ENCODE measurements at regions of chr6 and their contacts with region 1.

Region 1: DNA sequence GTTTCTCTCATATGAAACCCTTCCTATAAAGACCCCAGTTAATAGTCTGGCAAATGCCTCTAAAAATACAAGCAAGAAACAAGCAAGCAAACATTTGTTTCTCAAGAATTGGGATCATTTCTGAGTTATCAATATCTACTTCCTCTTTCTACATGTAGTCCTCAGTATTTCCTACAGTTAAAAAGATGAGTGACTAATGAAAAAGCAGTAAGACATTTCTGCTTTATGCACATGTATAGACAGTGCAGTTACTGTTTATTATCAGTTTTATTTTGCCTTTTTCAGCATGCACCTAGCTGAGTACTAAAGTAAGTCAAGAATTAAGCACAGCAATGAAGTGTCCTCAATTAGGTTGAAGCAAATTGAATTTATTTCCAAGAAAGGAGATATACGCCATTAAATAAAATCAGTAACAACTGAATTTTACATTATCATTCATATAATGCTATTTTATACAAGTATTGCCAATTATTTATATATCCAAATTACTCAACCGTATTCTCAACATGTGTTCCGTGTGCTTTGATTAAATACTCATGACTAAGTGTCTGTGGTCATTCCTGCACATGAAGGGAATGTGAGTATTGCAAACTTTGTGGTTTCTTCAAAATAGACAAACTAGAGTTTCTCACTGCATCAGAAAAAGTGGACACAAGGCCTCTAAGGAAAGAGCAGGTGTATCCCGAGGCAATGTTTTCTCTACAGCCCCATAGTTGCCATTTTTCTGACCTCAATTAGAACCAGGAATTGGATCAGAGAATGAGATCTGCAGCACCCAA is 159.3 kb upstream of the MARCKS start:
- H3K4me3 Mint-ChIP-seq: no peak overlapping the region
- H3K27ac Mint-ChIP-seq: peak overlapping the region; percentile 82
- H3K4me1 Mint-ChIP-seq: peaks cover 20% of the 10 kb centered on the region
- H3K27me3 Mint-ChIP-seq: no peaks in the 10 kb centered on the region

Region 2: DNA sequence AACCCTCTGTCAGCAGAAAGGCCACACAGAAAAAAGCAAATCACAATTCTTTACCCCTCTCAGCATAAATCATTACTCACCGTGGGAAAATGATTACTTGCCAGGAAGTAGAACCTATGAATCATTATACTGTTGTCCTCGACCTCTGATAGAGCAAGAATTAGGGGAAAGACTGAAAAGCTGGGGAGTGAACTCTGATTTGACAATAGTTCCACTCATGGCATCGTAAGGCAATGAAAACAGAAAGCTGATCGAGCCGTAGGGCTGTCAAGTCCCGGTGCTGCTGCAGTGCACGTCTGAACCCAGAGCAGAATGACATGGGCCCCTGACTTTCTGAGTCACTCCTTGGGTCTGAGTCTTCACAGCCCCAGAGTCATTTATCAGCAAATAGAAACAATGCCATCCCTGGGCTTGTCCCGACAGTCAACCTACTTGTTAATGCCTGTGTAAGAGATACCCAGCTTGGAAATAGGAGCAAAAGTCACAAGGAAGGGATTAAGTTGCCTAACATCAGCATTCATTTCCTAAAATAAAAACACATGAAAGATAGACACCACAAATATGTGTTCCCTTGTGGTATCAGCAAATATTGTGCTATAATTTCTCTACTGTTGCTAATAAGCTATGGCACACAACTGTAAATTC is 65.5 kb before region 1 on chr6:
- intact Hi-C with region 1: loop called (anchors 5 kb)
- H3K4me3 Mint-ChIP-seq: peak overlapping the region; percentile 48
- H3K27ac Mint-ChIP-seq: peak overlapping the region; percentile 95
- H3K4me1 Mint-ChIP-seq: peaks cover 58% of the 10 kb centered on the region
- H3K27me3 Mint-ChIP-seq: no peaks in the 10 kb centered on the region

Region 3: GRCh38 chr6:113654396-113654795 is 43.4 kb before region 1 on chr6:
- intact Hi-C with region 1: loop called (anchors 5 kb)
- H3K4me3 Mint-ChIP-seq: no peak overlapping the region
- H3K27ac Mint-ChIP-seq: peak overlapping the region; percentile 53
- H3K4me1 Mint-ChIP-seq: peaks cover 44% of the 10 kb centered on the region
- H3K27me3 Mint-ChIP-seq: no peaks in the 10 kb centered on the region

Region 4: GRCh38 chr6:113744861-113745260 is 47.0 kb after region 1 on chr6:
- intact Hi-C with region 1: loop called (anchors 5 kb)
- H3K4me3 Mint-ChIP-seq: no peak overlapping the region
- H3K27ac Mint-ChIP-seq: peak overlapping the region; percentile 12
- H3K4me1 Mint-ChIP-seq: peaks cover 18% of the 10 kb centered on the region
- H3K27me3 Mint-ChIP-seq: no peaks in the 10 kb centered on the region

Measured in dendritic cell treated with granulocyte-macrophage colony-stimulating factor and Interleukin-4, amounts not matched to agents 40 ng/mL and 50 ng/mL, for 4 days (primary cell).